Calu3 (cell line): ENCODE measurements at regions of chr6 and their contacts with region 1.

Region 1: DNA sequence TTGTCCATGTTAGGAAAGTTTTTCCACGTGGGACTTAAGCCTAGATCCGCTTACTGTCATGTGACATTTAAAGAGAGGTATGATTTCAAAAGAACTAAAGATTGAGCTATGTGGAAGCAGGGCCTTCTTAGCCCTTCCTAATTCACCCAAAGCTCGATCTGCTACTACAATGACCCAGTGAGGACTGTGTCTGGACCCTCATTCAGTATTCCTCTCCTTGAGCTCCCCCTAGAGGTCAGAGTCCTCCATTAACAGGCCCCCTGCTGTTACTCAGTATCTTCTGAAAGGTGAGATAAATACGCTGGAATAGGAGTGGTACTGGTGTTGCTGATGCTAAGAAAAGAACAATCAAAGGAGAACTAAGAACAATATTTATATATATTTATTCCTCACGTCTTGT is 414.0 kb downstream of the GJA1 start:
- DNase-seq: peak; percentile 79
- H3K4me3 Mint-ChIP-seq: no peak overlapping the region
- H3K27ac Mint-ChIP-seq: no peak overlapping the region
- H3K4me1 Mint-ChIP-seq: no peaks in the 10 kb centered on the region
- H3K27me3 Mint-ChIP-seq: no peaks in the 10 kb centered on the region
- CTCF ChIP-seq: peak; percentile 76

Region 2: DNA sequence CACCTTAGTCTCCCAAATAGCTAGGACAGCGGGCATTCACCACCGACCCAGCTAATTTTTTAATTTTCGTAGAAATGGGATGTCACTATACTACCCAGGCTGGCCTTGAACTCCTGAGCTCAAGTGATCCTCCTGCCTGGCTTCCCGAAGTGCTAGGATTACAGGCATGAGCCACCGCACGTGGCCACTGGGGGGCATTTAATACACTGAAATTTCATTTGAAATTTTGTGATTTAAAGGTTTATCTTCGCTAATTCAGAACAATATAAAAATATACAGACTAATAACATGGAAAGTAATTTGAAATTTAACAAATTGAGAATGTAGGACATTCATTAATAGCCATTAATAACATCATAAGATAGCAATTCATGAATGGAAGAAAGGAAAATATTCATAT is 494.7 kb before region 1 on chr6:
- CTCF ChIA-PET with region 1: no interaction called
- intact Hi-C with region 1: loop called (anchors 10 kb)
- DNase-seq: peak; percentile 19
- H3K4me3 Mint-ChIP-seq: no peak overlapping the region
- H3K27ac Mint-ChIP-seq: no peak overlapping the region
- H3K4me1 Mint-ChIP-seq: no peaks in the 10 kb centered on the region
- H3K27me3 Mint-ChIP-seq: no peaks in the 10 kb centered on the region
- CTCF ChIP-seq: peak; percentile 35

Region 3: DNA sequence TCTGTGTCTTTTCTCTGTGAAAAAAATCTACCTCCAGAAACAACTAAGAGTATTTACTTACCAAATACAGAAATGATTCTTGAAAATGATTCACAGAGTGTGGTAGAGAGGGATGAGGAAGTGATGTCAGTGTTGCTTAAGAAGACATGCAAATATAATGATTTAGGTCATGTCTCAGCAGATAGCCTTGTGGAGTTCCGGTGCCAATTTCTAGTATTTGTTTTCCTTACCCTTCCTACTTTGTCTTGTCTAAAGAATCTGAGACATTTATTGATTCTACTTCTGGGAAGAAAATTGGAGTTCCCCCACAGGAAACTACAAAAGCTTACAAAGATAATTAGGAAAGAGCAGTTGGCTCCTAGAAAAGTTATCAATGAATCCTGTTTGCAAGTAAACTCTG is 345.2 kb before region 1 on chr6:
- CTCF ChIA-PET with region 1: no interaction called
- intact Hi-C with region 1: loop called (anchors 5 kb)
- DNase-seq: peak; percentile 40
- H3K4me3 Mint-ChIP-seq: peak overlapping the region; percentile 11
- H3K27ac Mint-ChIP-seq: peak overlapping the region; percentile 94
- H3K4me1 Mint-ChIP-seq: peaks cover 39% of the 10 kb centered on the region
- H3K27me3 Mint-ChIP-seq: no peaks in the 10 kb centered on the region
- CTCF ChIP-seq: no peak

Region 4: GRCh38 chr6:121686611-121687023 is 162.9 kb before region 1 on chr6:
- CTCF ChIA-PET with region 1: interaction called, 3 read pairs
- intact Hi-C with region 1: loop called (anchors 10 kb)
- DNase-seq: no peak
- H3K4me3 Mint-ChIP-seq: no peak overlapping the region
- H3K27ac Mint-ChIP-seq: no peak overlapping the region
- H3K4me1 Mint-ChIP-seq: peaks cover 15% of the 10 kb centered on the region
- H3K27me3 Mint-ChIP-seq: no peaks in the 10 kb centered on the region
- CTCF ChIP-seq: no peak

Region 5: GRCh38 chr6:122184401-122184827 is 334.9 kb after region 1 on chr6:
- CTCF ChIA-PET with region 1: interaction called, 4 read pairs
- intact Hi-C with region 1: loop called (anchors 10 kb)
- DNase-seq: no peak
- H3K4me3 Mint-ChIP-seq: no peak overlapping the region
- H3K27ac Mint-ChIP-seq: no peak overlapping the region
- H3K4me1 Mint-ChIP-seq: no peaks in the 10 kb centered on the region
- H3K27me3 Mint-ChIP-seq: no peaks in the 10 kb centered on the region
- CTCF ChIP-seq: no peak